ENCODE measurements at regions of chr1 and their contacts with region 1.

Region 1: GRCh38 chr1:101178688-101179491 is 57.9 kb upstream of the S1PR1 start:
- DNase-seq: peak; percentile 82
- H3K4me3 Mint-ChIP-seq: peak overlapping the region; percentile 77
- H3K27ac Mint-ChIP-seq: peak overlapping the region; percentile 98
- H3K4me1 Mint-ChIP-seq: peaks cover 59% of the 10 kb centered on the region
- H3K27me3 Mint-ChIP-seq: no peaks in the 10 kb centered on the region

Region 2: DNA sequence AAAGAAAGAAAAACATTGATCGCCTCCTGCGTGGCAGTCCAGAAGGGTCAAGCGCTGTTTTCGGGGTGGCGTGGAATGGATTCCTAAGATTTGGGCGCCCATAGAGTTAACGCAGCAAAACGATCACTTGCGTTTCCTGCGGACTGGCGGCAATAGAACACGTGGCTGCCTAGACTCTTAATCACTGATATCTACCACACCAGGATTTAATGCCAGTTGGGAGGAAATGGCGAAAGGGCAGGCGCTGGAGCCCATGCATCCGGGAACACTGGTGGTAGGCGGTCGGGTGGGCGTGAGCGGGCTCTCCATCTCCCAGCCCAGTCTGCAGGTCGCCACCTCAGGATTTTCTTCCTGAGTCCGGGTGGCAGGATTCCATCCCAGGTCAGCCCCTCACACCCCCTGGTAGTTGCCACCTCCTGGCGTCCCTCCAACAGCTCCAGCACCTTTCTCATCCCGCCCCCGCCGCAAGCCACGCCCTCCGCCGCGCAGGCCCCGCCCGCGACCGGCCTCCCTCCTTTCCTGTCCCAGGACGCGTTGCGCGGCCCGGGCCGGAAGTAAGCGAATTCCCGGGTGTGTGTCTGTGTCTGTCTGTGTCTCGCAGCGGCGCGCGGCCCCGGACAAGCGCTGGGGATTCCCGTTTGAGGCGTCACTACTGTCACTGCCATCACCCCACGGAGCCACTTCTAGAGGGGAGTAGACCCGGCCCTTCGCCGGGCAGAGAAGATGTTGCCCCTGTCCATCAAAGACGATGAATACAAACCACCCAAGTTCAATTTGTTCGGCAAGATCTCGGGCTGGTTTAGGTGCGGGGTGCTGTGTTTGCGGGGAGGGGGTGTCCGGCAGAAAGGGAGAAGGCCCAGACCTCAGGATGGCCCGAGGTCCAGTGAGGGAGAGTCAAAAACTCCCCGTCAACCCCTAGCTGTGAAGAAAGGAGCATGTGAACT is 283.1 kb before region 1 on chr1 and contains the start of gene SLC30A7:
- intact Hi-C with region 1: loop called (anchors 1 kb)
- DNase-seq: peak; percentile 99
- H3K4me3 Mint-ChIP-seq: peak within 1 kb of the TSS; percentile 100
- H3K27ac Mint-ChIP-seq: peak within 1 kb of the TSS; percentile 100
- H3K4me1 Mint-ChIP-seq: peaks cover 36% of the 10 kb centered on the region
- H3K27me3 Mint-ChIP-seq: no peaks in the 10 kb centered on the region
- total RNA-seq, gene SLC30A7: 40.8 and 41.0 TPM in 2 replicates

Region 3: GRCh38 chr1:101004670-101005069 is 174.2 kb before region 1 on chr1:
- intact Hi-C with region 1: loop called (anchors 1 kb)
- DNase-seq: no peak
- H3K4me3 Mint-ChIP-seq: no peak overlapping the region
- H3K27ac Mint-ChIP-seq: no peak overlapping the region
- H3K4me1 Mint-ChIP-seq: peaks cover 33% of the 10 kb centered on the region
- H3K27me3 Mint-ChIP-seq: no peaks in the 10 kb centered on the region

Region 4: GRCh38 chr1:101136739-101137138 is 42.2 kb before region 1 on chr1:
- intact Hi-C with region 1: loop called (anchors 1 kb)
- DNase-seq: peak; percentile 79
- H3K4me3 Mint-ChIP-seq: peak overlapping the region; percentile 67
- H3K27ac Mint-ChIP-seq: peak overlapping the region; percentile 80
- H3K4me1 Mint-ChIP-seq: peaks cover 65% of the 10 kb centered on the region
- H3K27me3 Mint-ChIP-seq: peaks cover 1% of the 10 kb centered on the region

Region 5: DNA sequence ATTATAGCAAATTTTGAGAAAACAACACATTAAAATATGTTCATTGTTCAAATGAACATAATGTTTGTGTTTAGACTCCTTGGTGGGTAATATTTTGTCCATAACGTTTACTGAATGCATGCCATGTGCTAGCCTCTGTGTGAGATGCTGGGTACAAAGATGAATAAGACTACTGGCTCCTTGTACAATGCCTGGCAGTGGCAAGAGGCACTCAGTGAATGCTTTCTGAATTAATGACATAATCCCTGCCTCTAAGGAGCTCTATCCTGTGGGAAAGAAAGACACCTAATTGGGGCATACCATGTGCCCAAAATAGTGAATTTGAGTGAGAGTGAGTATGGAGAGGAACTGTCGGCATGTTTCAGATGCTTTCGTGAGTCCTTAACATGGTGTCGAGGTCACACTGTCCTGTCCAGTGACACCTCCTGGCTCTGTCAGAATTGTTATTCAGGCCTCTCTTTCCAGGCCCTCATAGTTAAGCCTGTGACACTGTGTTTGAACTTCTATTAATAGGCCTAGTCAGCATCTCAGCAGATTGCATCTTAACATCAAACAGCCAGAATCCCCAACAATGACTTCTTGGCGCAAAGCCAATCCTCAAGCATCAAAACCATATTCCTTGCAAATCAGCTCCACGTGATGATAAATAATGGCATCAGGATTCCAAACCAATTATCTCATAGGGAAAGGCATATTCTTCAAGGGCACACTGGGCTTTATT is 25.1 kb after region 1 on chr1:
- intact Hi-C with region 1: loop called (anchors 1 kb)
- DNase-seq: no peak
- H3K4me3 Mint-ChIP-seq: no peak overlapping the region
- H3K27ac Mint-ChIP-seq: no peak overlapping the region
- H3K4me1 Mint-ChIP-seq: peaks cover 25% of the 10 kb centered on the region
- H3K27me3 Mint-ChIP-seq: no peaks in the 10 kb centered on the region

Measured in activated CD4-positive, alpha-beta T cell treated with anti-CD3 and anti-CD28 coated beads, Interleukin-2, amount 10 ng/mL, durations not matched to agents 24 days and 14 days (primary cell).